Adrenal gland (tissue), 19 donors: ENCODE measurements at regions of chr17 and their contacts with region 1.

Region 1: GRCh38 chr17:794876-795275 is 12.7 kb downstream of the MRM3 start:
- DNase-seq: peak; percentile 70 to 91 (median 84)
- H3K4me3 ChIP-seq: no peak overlapping the region
- H3K27ac ChIP-seq: no peak overlapping the region
- H3K4me1 ChIP-seq: peaks cover 0 to 4% of the 10 kb centered on the region in 2 donors
- H3K27me3 ChIP-seq: no peaks in the 10 kb centered on the region
- CTCF ChIP-seq: peak; percentile 54 to 92 (median 85)
- POLR2A ChIP-seq: no peak

Region 2: GRCh38 chr17:732067-732901 is 62.6 kb before region 1 on chr17 and contains the start of gene TLCD3A:
- intact Hi-C with region 1: no loop called
- DNase-seq: peak; percentile 55 to 77 (median 68)
- H3K4me3 ChIP-seq: peak within 1 kb of the TSS in 2 of 4 donors; percentile 67 to 98
- H3K27ac ChIP-seq: peak within 1 kb of the TSS in 3 of 5 donors; percentile 39 to 71 (median 67)
- H3K4me1 ChIP-seq: no peaks in the 10 kb centered on the region
- H3K27me3 ChIP-seq: no peaks in the 10 kb centered on the region
- CTCF ChIP-seq: no peak
- POLR2A ChIP-seq: no peak
- total RNA-seq, gene TLCD3A: 0.72 to 8.7 (median 4.9) TPM

Region 3: DNA sequence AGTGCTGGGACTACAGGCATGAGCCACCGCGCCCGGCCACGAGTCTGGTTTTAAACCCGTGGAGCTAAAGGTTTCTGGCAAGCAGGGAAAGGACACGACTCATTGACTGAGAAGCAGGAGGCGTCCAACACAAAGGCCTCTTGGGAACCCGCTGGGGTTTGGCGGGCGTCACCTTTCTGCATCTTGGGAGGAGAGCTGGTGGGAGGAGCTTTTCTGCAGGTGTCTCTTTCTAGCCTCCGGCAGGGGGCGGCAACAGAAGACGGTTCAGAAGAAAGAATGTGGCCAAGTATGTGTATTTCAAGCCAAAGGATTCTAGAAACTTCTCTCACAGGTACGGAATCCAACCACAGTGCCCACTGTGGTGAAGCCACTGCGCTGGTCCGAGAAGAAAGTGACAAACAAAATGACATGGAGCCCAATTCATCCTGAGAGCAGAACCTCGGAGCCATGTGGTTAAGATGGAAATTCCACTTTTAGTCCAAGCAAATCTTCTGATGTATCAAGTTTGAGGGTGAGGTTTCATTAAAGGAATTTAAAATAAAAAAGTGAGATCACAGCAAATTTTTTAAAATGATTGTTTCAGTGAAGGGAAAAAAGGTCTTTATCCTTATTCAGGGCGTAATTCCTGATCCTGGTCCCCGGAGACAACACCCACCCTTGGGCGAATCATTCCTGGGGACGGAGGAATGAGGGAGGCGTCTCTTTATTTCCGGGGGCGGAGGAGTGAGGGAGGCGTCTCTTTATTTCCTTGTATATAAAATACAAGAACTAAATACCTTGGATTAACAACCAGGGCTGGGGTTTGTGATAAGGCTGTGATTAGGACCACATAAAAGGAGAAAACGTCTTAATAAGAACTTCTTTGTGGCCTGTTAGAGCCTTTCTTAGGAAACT is 84.9 kb after region 1 on chr17:
- intact Hi-C with region 1: loop called (anchors 5 to 10 kb)
- DNase-seq: peak; percentile 55 to 91 (median 82)
- H3K4me3 ChIP-seq: no peak overlapping the region
- H3K27ac ChIP-seq: peak overlapping the region in 4 of 5 donors; percentile 26 to 90 (median 65)
- H3K4me1 ChIP-seq: peaks cover 13 to 44% of the 10 kb centered on the region in 2 donors
- H3K27me3 ChIP-seq: no peaks in the 10 kb centered on the region
- CTCF ChIP-seq: peak; percentile 25 to 57 (median 48)
- POLR2A ChIP-seq: no peak

Region 4: GRCh38 chr17:979538-980405 is 184.9 kb after region 1 on chr17 and contains the start of gene NXN:
- intact Hi-C with region 1: loop called (anchors 5 kb)
- DNase-seq: peak; percentile 76 to 93 (median 88)
- H3K4me3 ChIP-seq: peak within 1 kb of the TSS in 2 of 4 donors; percentile 57 to 81
- H3K27ac ChIP-seq: peak within 1 kb of the TSS in 4 of 5 donors; percentile 24 to 86 (median 73)
- H3K4me1 ChIP-seq: peaks cover 5 to 9% of the 10 kb centered on the region in 2 donors
- H3K27me3 ChIP-seq: no peaks in the 10 kb centered on the region
- CTCF ChIP-seq: peak in 1 of 6 experiments; percentile 25
- POLR2A ChIP-seq: no peak
- total RNA-seq, gene NXN: 3.6 to 24.7 (median 12.8) TPM

Region 5: DNA sequence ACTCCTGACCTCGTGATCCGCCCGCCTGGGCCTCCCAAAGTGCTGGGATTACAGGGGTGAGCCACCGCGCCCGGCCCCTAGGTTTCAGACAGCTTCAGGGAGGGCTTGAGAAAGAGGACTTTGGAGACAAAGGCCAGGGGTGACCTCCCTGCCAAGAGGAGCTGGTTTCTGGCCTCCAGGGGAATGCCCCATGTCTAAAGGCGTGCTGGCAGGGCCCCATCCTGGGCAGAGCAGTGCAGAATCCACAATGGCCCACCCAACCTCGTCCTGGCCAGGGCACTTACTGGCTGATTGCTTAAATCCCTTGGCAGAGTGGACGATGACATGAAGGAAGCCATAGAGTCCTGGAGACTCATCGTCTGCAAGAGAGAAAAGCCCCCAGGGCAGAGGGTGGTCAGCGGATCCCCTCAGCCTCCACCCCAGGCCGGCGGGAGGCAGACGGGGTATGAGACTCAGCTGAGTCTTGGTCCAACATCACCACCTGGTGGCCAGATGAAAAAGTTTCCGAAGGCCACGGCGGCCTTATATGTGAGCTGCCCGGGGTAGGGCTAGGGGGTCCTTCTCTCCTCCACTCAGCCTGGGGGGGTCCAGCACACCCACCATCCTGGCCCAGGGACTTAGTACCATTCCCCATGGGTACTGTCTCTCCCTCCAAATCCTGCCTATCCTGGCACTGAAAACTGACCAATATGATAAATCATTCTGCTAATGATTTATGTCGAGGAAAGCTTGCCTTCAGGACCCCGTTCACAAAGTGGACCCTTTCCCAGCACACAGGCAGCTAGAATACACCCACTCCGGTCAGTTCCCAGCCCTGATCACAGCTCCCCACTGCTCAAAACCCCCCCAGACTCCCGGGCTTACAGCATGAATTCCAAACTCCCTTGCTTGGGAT is 261.1 kb after region 1 on chr17:
- intact Hi-C with region 1: loop called in 1 of 2 experiments (anchors 10 kb)
- DNase-seq: peak; percentile 55 to 90 (median 69)
- H3K4me3 ChIP-seq: no peak overlapping the region
- H3K27ac ChIP-seq: no peak overlapping the region
- H3K4me1 ChIP-seq: no peaks in the 10 kb centered on the region
- H3K27me3 ChIP-seq: no peaks in the 10 kb centered on the region
- CTCF ChIP-seq: peak; percentile 54 to 83 (median 78)
- POLR2A ChIP-seq: no peak